ENCODE measurements at regions of chr4 and their contacts with region 1.

Region 1: DNA sequence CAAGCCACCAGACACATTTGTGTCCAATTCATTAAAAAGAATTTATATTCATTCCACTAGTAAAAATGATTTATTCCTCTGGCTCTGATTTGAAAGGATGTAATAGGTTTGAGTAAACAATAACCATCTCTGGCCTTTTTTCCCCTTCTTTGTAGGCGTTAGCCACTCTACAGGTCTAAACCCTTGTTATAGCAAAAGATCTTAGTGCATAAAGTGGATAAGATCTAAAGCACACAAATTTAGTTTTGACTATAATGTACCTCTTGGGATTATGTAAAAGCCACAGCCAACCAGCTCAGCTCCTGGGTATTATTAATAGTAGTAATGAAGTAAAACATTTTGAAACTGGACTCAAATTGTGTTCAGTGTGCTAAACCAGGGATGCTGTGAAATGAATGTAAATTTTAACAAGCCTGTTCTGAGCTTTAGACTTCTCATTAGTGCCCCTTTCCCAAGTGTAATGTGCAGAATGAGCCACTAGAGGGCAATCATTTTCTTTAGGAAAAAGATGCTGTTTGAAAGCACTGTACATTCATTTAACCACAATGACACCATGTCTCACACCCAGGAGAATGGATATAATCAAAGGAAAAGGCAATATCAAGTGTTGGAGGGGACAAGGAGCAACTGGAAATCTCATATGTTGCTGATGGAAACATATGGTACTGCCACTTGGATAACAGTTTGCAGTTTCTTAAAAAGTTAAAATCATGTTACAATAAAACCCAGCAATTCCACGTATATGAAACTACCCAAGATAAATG is 69.7 kb downstream of the KLHL8 start:
- DNase-seq: no peak
- ATAC-seq: peak; percentile 59 to 86 (median 78)
- H3K4me3 ChIP-seq: no peak overlapping the region
- H3K27ac ChIP-seq: no peak overlapping the region
- H3K4me1 ChIP-seq: peaks cover 5% of the 10 kb centered on the region
- H3K27me3 ChIP-seq: no peaks in the 10 kb centered on the region
- CTCF ChIP-seq: peak; percentile 95

Region 2: GRCh38 chr4:87235020-87235671 is 84.5 kb after region 1 on chr4:
- intact Hi-C with region 1: loop called (anchors 1 to 2 kb)
- DNase-seq: no peak
- ATAC-seq: peak in 1 of 4 donors; percentile 49
- H3K4me3 ChIP-seq: peak overlapping the region; percentile 66
- H3K27ac ChIP-seq: no peak overlapping the region
- H3K4me1 ChIP-seq: no peaks in the 10 kb centered on the region
- H3K27me3 ChIP-seq: no peaks in the 10 kb centered on the region
- CTCF ChIP-seq: no peak

Region 3: GRCh38 chr4:88991761-88992160 is 1841.1 kb after region 1 on chr4:
- intact Hi-C with region 1: loop called in 1 of 2 experiments (anchors 10 kb)
- DNase-seq: no peak
- ATAC-seq: no peak
- H3K4me3 ChIP-seq: no peak overlapping the region
- H3K27ac ChIP-seq: no peak overlapping the region
- H3K4me1 ChIP-seq: peaks cover 17% of the 10 kb centered on the region
- H3K27me3 ChIP-seq: no peaks in the 10 kb centered on the region
- CTCF ChIP-seq: no peak

Measured in psoas muscle (tissue), 8 donors.